CD4-positive, alpha-beta memory T cell (primary cell): ENCODE measurements at regions of chr15 and their contacts with region 1.

Region 1: GRCh38 chr15:89087830-89088604 is at the start of gene ABHD2:
- DNase-seq: peak; percentile 98 to 99 (median 98)
- H3K4me3 ChIP-seq: peak within 1 kb of the TSS; percentile 49 to 89
- H3K4me3 Mint-ChIP-seq: no peak within 1 kb of the TSS
- H3K27ac ChIP-seq: peak within 1 kb of the TSS; percentile 75
- H3K27ac Mint-ChIP-seq: peak within 1 kb of the TSS in 6 of 7 donors; percentile 57 to 98 (median 94)
- H3K4me1 ChIP-seq: peaks cover 38% of the 10 kb centered on the region
- H3K4me1 Mint-ChIP-seq: peaks cover 24 to 38% (median 32%) of the 10 kb centered on the region in 4 donors
- H3K27me3 ChIP-seq: no peaks in the 10 kb centered on the region
- H3K27me3 Mint-ChIP-seq: no peaks in the 10 kb centered on the region
- total RNA-seq, gene ABHD2: 65.4 to 68.9 TPM

Region 2: GRCh38 chr15:88897456-88898194 is 190.4 kb before region 1 on chr15:
- CTCF ChIA-PET with region 1: interaction called, 5 read pairs
- POLR2A ChIA-PET with region 1: interaction called, 4 read pairs
- intact Hi-C with region 1: loop called (anchors 1 kb)
- DNase-seq: peak; percentile 78 to 79 (median 78)
- H3K4me3 ChIP-seq: no peak overlapping the region
- H3K4me3 Mint-ChIP-seq: peak overlapping the region; percentile 20 to 80 (median 58)
- H3K27ac ChIP-seq: no peak overlapping the region
- H3K27ac Mint-ChIP-seq: peak overlapping the region; percentile 14 to 93 (median 67)
- H3K4me1 ChIP-seq: peaks cover 43% of the 10 kb centered on the region
- H3K4me1 Mint-ChIP-seq: peaks cover 28 to 58% (median 45%) of the 10 kb centered on the region in 4 donors
- H3K27me3 ChIP-seq: no peaks in the 10 kb centered on the region
- H3K27me3 Mint-ChIP-seq: no peaks in the 10 kb centered on the region

Region 3: GRCh38 chr15:89098281-89098680 is 10.3 kb after region 1 on chr15:
- CTCF ChIA-PET with region 1: interaction called, 6 read pairs
- POLR2A ChIA-PET with region 1: interaction called, 19 read pairs
- intact Hi-C with region 1: no loop called
- DNase-seq: no peak
- H3K4me3 ChIP-seq: no peak overlapping the region
- H3K4me3 Mint-ChIP-seq: no peak overlapping the region
- H3K27ac ChIP-seq: no peak overlapping the region
- H3K27ac Mint-ChIP-seq: no peak overlapping the region
- H3K4me1 ChIP-seq: peaks cover 6% of the 10 kb centered on the region
- H3K4me1 Mint-ChIP-seq: peaks cover 17 to 32% (median 22%) of the 10 kb centered on the region in 4 donors
- H3K27me3 ChIP-seq: no peaks in the 10 kb centered on the region
- H3K27me3 Mint-ChIP-seq: no peaks in the 10 kb centered on the region

Region 4: DNA sequence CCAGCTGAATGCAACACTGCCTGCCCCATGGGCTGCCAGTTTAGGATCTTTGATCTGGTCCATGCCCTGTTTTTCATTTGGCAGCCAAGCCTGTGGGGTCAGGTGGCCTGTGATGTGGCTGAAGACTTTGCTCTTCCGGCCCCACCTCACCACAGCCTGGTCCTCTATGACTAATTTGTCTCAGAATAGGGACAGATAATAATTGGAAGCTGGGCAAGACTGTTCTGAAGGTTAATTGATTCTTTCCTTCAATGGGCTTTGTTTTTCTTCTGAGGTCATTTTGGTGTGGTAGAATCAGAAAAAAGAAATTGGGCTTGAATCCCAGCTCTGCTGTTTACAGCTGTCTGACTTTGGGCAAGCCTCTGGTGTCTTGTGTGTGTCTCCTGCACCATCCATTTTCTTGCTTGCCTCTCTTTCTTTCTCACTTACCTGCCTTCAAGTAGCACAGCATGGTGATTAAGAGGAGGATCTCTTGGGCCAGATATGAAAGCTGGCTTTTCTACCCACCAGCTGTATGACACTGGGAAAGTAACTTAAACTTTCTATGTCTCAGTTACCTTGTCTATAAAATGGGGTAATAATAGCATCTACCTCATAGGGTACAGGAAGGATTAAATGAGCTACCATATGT is 24.4 kb after region 1 on chr15:
- CTCF ChIA-PET with region 1: interaction called, 12 read pairs
- POLR2A ChIA-PET with region 1: interaction called, 8 read pairs
- intact Hi-C with region 1: no loop called
- DNase-seq: no peak
- H3K4me3 ChIP-seq: no peak overlapping the region
- H3K4me3 Mint-ChIP-seq: peak overlapping the region in 3 of 8 donors; percentile 10 to 50 (median 46)
- H3K27ac ChIP-seq: no peak overlapping the region
- H3K27ac Mint-ChIP-seq: peak overlapping the region; percentile 24 to 78 (median 48)
- H3K4me1 ChIP-seq: peaks cover 25% of the 10 kb centered on the region
- H3K4me1 Mint-ChIP-seq: peaks cover 23 to 46% (median 33%) of the 10 kb centered on the region in 4 donors
- H3K27me3 ChIP-seq: no peaks in the 10 kb centered on the region
- H3K27me3 Mint-ChIP-seq: no peaks in the 10 kb centered on the region

Region 5: DNA sequence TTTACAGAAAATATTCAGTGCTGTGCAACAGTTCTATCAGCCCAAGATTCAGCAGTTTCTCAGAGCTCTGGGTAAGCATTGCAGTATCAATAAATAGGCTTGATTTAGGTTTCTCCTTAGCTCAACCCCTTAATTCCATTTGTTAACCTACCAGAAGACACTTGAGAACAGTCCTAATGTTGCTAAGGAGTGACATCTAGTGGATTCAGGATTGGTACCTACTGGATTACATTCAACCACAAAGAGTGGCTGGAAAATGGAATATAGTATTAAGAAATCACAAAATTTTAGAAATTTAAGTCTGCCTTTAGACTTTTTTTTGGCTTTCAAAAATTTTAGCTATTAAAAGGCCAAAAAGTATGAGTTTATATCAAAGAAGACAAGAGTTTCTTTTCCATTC is 211.9 kb after region 1 on chr15:
- CTCF ChIA-PET with region 1: no interaction called
- POLR2A ChIA-PET with region 1: no interaction called
- intact Hi-C with region 1: no loop called
- DNase-seq: no peak
- H3K4me3 ChIP-seq: no peak overlapping the region
- H3K4me3 Mint-ChIP-seq: no peak overlapping the region
- H3K27ac ChIP-seq: no peak overlapping the region
- H3K27ac Mint-ChIP-seq: no peak overlapping the region
- H3K4me1 ChIP-seq: no peaks in the 10 kb centered on the region
- H3K4me1 Mint-ChIP-seq: no peaks in the 10 kb centered on the region
- H3K27me3 ChIP-seq: no peaks in the 10 kb centered on the region
- H3K27me3 Mint-ChIP-seq: no peaks in the 10 kb centered on the region